HepG2 (cell line): ENCODE measurements at regions of chr9 and their contacts with region 1.

Region 1: DNA sequence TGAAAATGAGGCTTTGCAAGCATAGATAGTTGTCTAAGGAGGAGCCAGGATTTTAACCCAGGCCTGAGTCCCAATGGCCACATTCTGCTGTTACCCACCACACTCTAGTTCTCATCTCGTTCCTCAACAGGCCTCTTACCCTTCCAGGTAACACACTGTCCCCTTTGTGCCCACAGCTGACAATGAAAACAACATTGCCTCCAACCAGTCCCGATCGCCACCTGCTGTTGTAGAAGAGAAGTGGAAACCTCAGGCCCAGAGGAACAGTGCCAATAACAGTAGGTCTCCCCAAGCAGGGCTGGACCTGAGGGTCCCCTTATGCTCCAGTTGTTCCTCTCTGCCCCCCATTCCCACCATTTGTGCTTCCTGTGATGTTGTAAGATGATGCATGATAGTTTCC is 30.4 kb downstream of the AMBP start:
- DNase-seq: peak; percentile 68
- ATAC-seq: peak; percentile 96
- H3K4me3 ChIP-seq: no peak overlapping the region
- H3K27ac ChIP-seq: no peak overlapping the region
- H3K4me1 ChIP-seq: peaks cover 21% of the 10 kb centered on the region
- H3K27me3 ChIP-seq: peaks cover 0 to 6% of the 10 kb centered on the region in 2 experiments; a peak in 1 of 5 replicates
- CTCF ChIP-seq: peak; percentile 85
- EP300 ChIP-seq: no peak
- POLR2A ChIP-seq: no peak
- RAD21 ChIP-seq: peak; percentile 63

Region 2: GRCh38 chr9:113682297-113682771 is 365.4 kb before region 1 on chr9:
- CTCF ChIA-PET with region 1: no interaction called
- POLR2A ChIA-PET with region 1: no interaction called
- in situ Hi-C with region 1: no loop called
- intact Hi-C with region 1: loop called (anchors 1 kb)
- DNase-seq: peak; percentile 76
- ATAC-seq: peak; percentile 84
- H3K4me3 ChIP-seq: peak overlapping the region in 1 of 3 experiments; percentile 25; a peak in 1 of 6 replicates
- H3K27ac ChIP-seq: no peak overlapping the region
- H3K4me1 ChIP-seq: peaks cover 10% of the 10 kb centered on the region; the same call in 1 of the 2 replicates
- H3K27me3 ChIP-seq: peaks cover 6 to 49% of the 10 kb centered on the region in 2 experiments; a peak in 3 of 5 replicates
- CTCF ChIP-seq: peak; percentile 87
- EP300 ChIP-seq: no peak
- POLR2A ChIP-seq: no peak
- RAD21 ChIP-seq: peak; percentile 58; the same call in 1 of the 2 replicates

Region 3: GRCh38 chr9:113737517-113738271 is 310.0 kb before region 1 on chr9:
- CTCF ChIA-PET with region 1: interaction called, 5 read pairs
- POLR2A ChIA-PET with region 1: no interaction called
- in situ Hi-C with region 1: loop called (anchors 25 kb)
- intact Hi-C with region 1: loop called (anchors 1 kb)
- DNase-seq: peak; percentile 46
- ATAC-seq: peak; percentile 78
- H3K4me3 ChIP-seq: no peak overlapping the region
- H3K27ac ChIP-seq: no peak overlapping the region
- H3K4me1 ChIP-seq: no peaks in the 10 kb centered on the region
- H3K27me3 ChIP-seq: peaks cover 0 to 10% of the 10 kb centered on the region in 2 experiments; a peak in 1 of 5 replicates
- CTCF ChIP-seq: peak; percentile 77
- EP300 ChIP-seq: no peak
- POLR2A ChIP-seq: no peak
- RAD21 ChIP-seq: peak; percentile 49; the same call in 1 of the 2 replicates

Region 4: DNA sequence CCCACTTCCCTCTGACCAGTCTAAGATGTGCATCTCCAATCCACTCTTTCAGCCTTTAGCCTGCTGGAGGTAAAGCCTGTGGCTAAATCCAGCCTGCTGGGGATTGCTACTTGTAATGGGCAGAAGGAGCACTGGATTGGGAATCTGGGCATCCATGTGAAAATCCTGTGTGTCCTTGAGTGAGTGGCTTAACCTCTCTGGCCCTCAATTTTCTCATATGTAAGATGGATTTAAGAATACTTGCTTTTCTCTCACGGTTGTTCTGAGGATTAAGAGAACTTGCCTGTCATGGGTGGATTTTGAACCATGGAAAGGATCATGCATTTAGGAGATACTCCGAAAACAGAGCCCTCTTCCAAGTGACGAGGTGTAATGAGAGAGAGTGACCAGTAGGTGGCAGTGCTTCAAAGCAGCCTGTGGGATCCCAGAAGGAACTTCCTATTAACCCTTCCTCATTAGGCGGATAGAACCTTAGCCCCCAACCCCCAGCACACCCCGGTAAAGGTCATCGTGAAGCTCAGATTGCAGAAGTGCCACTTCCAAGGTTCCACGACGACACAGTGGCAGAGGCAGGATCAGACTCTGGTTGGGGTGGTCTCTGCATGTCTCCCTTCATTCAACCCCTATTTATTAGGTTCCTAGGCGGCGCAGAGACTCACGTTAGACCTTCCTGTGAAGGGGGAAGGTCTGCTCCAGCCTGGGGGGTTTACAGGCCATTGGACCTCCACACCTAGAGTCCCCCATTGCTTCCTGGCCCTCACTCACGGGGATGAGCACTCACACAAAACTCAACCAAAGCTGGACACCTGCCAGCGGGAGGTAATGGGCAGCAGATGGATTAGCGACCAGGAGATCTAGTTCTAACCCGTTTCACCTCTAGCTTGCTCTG is 240.3 kb before region 1 on chr9:
- CTCF ChIA-PET with region 1: interaction called, 9 read pairs
- POLR2A ChIA-PET with region 1: no interaction called
- in situ Hi-C with region 1: no loop called
- intact Hi-C with region 1: loop called (anchors 1 kb)
- DNase-seq: peak; percentile 19
- ATAC-seq: peak; percentile 65
- H3K4me3 ChIP-seq: no peak overlapping the region
- H3K27ac ChIP-seq: no peak overlapping the region
- H3K4me1 ChIP-seq: no peaks in the 10 kb centered on the region
- H3K27me3 ChIP-seq: 0 out of 5 replicates have a peak, but pooled peaks cover 0 to 12% of the 10 kb centered on the region in 2 experiments
- CTCF ChIP-seq: peak; percentile 82
- EP300 ChIP-seq: no peak
- POLR2A ChIP-seq: no peak
- RAD21 ChIP-seq: peak; percentile 22; the same call in 1 of the 2 replicates

Region 5: GRCh38 chr9:113876151-113876992 is 171.3 kb before region 1 on chr9 and contains the start of gene ZNF618:
- CTCF ChIA-PET with region 1: no interaction called
- POLR2A ChIA-PET with region 1: no interaction called
- in situ Hi-C with region 1: no loop called
- intact Hi-C with region 1: loop called (anchors 10 kb)
- DNase-seq: no peak
- ATAC-seq: peak; percentile 85
- H3K4me3 ChIP-seq: peak within 1 kb of the TSS; percentile 66 to 71 (median 69)
- H3K27ac ChIP-seq: no peak within 1 kb of the TSS
- H3K4me1 ChIP-seq: no peaks in the 10 kb centered on the region
- H3K27me3 ChIP-seq: peaks cover 0 to 30% of the 10 kb centered on the region in 2 experiments; a peak in 3 of 5 replicates
- CTCF ChIP-seq: no peak
- EP300 ChIP-seq: no peak
- POLR2A ChIP-seq: no peak
- RAD21 ChIP-seq: no peak
- total RNA-seq, gene ZNF618: 0.06 and 0.07 TPM in 2 replicates

Region 6: DNA sequence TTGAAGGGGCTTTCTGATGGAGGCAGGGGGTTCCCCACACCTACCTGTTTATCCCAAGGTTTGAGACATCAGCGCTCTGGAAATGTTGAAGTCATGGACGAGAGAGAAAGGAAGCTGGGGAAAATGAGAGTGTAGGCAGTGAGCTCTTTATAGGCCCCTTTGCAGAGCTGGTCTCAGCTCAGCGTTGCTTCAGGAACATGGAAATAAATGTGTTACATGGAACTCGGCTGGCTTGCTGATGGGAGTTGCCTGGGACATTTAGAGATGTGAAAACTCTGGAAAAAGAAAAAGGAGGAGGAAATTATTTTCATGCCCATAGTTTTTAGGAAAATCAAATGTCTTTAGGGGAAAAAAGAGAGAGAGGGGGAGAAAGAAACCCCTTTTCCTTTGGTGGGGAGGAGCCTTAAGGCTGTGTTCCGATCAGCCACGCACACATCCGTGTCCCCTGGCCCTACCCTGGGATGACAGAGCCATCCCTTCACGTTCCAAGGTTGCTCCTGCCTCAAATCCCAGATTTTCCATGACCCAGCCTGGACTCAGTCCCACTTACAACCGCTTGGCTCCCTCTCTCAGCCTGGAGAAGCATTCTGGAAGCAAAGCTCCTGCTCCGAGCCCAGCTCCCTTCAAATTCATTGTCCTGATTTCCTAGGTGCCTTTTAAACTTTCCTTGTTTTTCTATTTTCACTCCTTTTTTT is 185.9 kb after region 1 on chr9:
- CTCF ChIA-PET with region 1: no interaction called
- POLR2A ChIA-PET with region 1: no interaction called
- in situ Hi-C with region 1: no loop called
- intact Hi-C with region 1: no loop called
- DNase-seq: no peak
- ATAC-seq: no peak
- H3K4me3 ChIP-seq: no peak overlapping the region
- H3K27ac ChIP-seq: no peak overlapping the region
- H3K4me1 ChIP-seq: no peaks in the 10 kb centered on the region
- H3K27me3 ChIP-seq: no peaks in the 10 kb centered on the region
- CTCF ChIP-seq: no peak
- EP300 ChIP-seq: no peak
- POLR2A ChIP-seq: no peak
- RAD21 ChIP-seq: no peak